Heart left ventricle (tissue), 16 donors: ENCODE measurements at regions of chr12 and their contacts with region 1.

Region 1: DNA sequence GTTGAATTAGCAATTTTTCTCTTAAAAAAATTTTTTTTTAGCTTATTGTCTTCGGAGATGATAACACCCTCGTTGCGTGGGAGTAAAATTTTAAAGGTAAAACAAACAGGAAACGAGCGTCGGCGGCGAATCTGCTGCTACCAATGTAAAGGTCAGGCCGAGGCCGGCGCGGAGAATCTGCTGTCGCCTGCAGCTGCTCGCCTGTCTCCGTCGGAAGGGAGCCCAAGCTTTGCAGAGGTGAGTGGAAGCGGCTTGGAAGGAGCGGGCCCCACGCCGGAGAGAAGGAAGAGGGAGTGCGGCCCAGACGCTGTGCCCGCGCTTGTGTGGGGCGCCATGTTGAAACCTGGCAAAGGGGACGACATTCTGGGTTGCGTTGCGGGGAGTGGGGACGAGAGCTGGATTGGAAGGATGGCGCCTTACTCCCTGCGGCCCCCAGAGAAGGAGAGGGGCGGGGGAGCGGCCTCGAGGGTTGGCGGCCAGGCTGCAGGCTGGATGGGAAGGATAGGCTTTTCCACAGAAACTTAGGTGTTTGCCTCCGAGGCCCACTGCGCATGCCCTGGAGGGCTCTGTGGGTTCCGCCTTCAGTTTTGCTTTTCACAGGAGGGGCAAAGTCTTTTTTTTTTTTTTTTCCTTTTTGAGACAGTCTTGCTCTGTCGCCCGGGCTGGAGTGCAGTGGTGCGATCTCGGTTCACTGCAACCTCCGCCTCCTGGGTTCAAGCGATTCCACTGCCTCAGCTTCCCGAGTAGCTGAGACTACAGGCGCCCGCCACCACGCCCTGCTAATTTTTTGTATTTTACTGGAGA is at the start of gene SNRNP35:
- DNase-seq: peak; percentile 81 to 91 (median 84)
- ATAC-seq: peak; percentile 85 to 91 (median 90)
- H3K4me3 ChIP-seq: peak within 1 kb of the TSS; percentile 63 to 93 (median 79)
- H3K27ac ChIP-seq: peak within 1 kb of the TSS; percentile 94 to 99 (median 98)
- H3K4me1 ChIP-seq: peaks cover 0 to 25% (median 12%) of the 10 kb centered on the region in 12 donors
- H3K27me3 ChIP-seq: no peaks in the 10 kb centered on the region
- CTCF ChIP-seq: peak in 1 of 12 donors; percentile 4
- POLR2A ChIP-seq: peak in 1 of 2 donors; percentile 43
- total RNA-seq, gene SNRNP35: 18.5 to 27.4 (median 20.0) TPM

Region 2: DNA sequence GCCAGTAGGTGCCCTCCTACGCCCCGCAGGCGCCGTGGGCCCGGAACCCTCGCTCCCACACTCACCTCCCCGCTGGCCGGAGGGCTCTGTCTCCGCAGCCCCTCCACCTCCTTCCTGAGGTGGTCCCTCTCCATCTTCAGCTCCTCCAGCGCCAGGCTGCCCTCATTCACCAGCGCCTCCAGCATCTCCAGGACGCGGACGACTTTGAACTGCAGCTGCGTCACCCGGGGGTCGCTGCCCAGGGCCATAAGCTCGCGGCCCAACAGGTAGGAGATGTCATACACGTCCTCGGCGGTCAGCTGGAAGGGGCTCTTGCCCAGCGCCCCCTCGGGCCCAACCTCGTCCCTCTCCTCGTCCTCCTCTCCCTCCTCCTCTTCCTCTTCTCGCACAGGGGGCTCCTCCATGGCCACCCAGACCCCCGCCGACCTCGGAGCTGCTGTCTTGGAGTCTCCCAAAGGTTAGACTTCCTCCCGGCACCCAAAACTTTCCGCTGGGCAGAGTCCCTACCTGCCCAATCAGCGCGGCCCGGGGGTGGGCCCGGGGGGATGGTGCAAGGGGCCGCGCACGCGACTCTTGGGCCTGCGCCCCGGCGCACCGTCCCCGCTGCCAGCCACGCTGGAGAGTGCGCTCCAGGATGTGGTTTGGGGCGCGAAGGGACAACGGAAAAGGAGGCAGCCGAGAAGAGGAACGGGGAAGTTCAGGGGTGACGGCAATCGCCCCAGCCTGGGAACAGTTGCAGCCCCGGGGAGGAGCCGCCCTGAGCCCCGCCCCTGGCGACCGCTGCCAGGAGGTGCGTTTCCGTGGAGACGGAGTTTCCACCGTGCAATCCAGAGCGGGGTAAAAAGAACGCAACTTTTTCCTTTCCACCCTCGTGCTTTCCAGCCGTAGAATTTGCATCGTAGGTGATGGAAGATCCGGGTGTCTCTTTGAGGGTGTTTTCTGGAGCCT is 21.9 kb before region 1 on chr12 and contains the start of gene RILPL2:
- intact Hi-C with region 1: loop called in 1 of 10 experiments (anchors 2 kb)
- DNase-seq: peak; percentile 90 to 94 (median 90)
- ATAC-seq: peak; percentile 91 to 98 (median 96)
- H3K4me3 ChIP-seq: peak within 1 kb of the TSS; percentile 63 to 98 (median 91)
- H3K27ac ChIP-seq: peak within 1 kb of the TSS; percentile 47 to 93 (median 82)
- H3K4me1 ChIP-seq: peaks cover 0 to 51% (median 27%) of the 10 kb centered on the region in 12 donors
- H3K27me3 ChIP-seq: no peaks in the 10 kb centered on the region
- CTCF ChIP-seq: peak in 1 of 12 donors; percentile 3
- POLR2A ChIP-seq: peak in 1 of 2 donors; percentile 63
- total RNA-seq, gene RILPL2: 1.6 to 3.4 (median 2.1) TPM